ENCODE measurements at regions of chr17 and their contacts with region 1.

Region 1: GRCh38 chr17:64262417-64263260 is at the start of gene TEX2:
- DNase-seq: peak; percentile 41
- ATAC-seq: peak; percentile 34
- H3K4me3 ChIP-seq: peak within 1 kb of the TSS; percentile 89
- H3K27ac ChIP-seq: peak within 1 kb of the TSS; percentile 1; the same call in 1 of the 2 replicates
- H3K4me1 ChIP-seq: peaks cover 28% of the 10 kb centered on the region
- H3K27me3 ChIP-seq: no peaks in the 10 kb centered on the region
- CTCF ChIP-seq: no peak
- total RNA-seq, gene TEX2: 44.2 and 50.5 TPM in 2 replicates

Region 2: DNA sequence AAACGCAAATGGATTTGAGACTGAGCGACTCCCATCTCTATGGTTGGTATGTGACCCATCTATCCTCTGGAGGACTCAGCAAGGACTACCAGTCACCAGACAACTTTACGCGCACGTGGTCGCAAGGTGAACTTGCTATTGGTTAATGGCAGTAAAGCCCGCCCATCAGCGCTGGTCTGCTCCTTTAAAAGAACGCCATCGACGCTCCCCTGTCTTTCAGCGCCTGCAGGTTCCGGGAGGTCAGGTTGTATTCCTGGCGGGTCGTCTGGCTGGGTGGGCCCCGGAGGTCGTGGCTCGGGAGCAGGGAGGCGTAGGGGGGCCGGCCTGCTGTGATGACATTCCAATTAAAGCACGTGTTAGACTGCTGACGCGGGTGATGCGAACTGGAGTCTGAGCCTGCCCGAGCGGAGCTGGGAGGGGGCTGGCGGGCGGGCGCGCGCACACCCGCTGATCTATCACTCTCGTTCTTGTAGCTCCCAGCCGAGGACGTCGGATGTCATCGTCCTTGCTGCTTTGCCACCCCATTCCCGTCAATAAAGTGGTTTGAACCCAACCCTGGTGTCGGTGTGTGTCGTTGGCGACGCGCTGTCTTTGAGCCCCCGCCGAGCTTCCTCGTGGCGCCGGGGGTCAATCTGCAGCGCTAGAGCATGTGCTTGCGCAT is 116.8 kb before region 1 on chr17:
- CTCF ChIA-PET with region 1: interaction called, 4 read pairs
- POLR2A ChIA-PET with region 1: no interaction called
- intact Hi-C with region 1: loop called (anchors 5 kb)
- DNase-seq: peak; percentile 100
- ATAC-seq: peak; percentile 88
- H3K4me3 ChIP-seq: peak overlapping the region; percentile 81
- H3K27ac ChIP-seq: peak overlapping the region; percentile 79
- H3K4me1 ChIP-seq: peaks cover 15% of the 10 kb centered on the region
- H3K27me3 ChIP-seq: no peaks in the 10 kb centered on the region
- CTCF ChIP-seq: no peak

Region 3: DNA sequence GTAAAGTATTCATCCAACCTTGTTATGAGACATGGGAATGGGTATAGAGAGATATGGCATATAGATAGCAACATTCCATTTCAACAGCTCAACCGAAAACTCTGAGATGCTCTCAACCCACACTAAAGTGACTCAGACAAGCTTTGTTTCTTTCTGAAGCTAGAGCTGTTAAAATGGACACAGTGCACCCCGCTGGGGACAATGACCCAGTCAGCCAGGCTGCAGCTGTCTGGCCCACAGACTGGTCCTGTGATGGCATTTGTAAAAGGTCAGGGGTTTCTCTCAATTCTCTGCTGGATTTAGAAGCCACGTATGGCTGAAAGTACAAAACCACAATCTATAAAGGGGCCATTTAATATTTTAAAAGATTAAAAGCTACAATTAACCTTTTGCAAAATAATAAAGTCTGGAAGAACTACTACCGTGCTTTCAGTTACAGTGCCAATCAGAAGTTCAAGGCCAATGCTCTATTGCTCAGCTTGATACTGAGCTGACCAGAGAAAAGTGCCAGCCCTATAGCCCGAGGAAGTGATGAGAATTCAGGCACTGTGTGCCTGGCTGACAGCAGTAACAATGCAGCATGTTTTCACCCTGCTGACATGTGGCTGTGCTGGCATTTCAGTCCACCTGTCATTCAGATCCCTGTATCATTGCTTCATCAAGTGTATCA is 59.8 kb before region 1 on chr17:
- CTCF ChIA-PET with region 1: no interaction called
- POLR2A ChIA-PET with region 1: no interaction called
- intact Hi-C with region 1: loop called (anchors 5 kb)
- DNase-seq: peak; percentile 86
- ATAC-seq: peak; percentile 79
- H3K4me3 ChIP-seq: no peak overlapping the region
- H3K27ac ChIP-seq: 0 out of 2 replicates have a peak overlapping the region, but pooled peaks have one; percentile 7
- H3K4me1 ChIP-seq: peaks cover 16% of the 10 kb centered on the region
- H3K27me3 ChIP-seq: no peaks in the 10 kb centered on the region
- CTCF ChIP-seq: 0 out of 2 replicates have a peak, but pooled peaks have one; percentile 19

Region 4: DNA sequence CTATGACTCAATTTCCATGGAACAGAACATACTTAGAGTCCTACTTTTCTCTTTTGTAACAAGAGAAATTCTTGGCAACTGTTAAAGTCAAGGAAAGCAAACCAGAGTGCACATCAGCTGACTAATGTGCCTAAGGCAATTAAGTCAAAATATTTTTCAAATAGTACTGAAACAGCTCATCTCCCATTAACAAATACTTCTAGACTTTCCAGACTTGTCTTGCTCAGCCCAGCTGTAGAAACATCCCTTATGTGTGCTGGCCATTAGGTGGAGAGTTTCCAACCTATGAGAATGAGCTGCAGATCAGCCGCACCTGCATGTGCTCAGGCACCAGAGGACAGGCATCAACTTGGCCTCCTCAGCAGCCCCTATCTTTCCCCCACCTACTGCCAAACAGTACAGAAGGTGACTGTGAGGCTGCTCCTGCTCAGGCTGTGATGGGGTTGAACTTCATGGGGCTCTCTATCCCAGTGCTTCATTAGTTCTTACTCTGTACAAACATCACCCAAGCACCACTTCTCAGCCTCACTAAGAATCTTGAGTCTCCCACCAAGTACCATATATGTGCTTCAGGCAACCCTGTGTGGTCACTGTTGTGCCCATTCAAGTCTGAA is 31.7 kb before region 1 on chr17:
- CTCF ChIA-PET with region 1: no interaction called
- POLR2A ChIA-PET with region 1: no interaction called
- intact Hi-C with region 1: loop called (anchors 2 kb)
- DNase-seq: peak; percentile 97
- ATAC-seq: peak; percentile 95
- H3K4me3 ChIP-seq: no peak overlapping the region
- H3K27ac ChIP-seq: peak overlapping the region; percentile 58
- H3K4me1 ChIP-seq: peaks cover 25% of the 10 kb centered on the region
- H3K27me3 ChIP-seq: no peaks in the 10 kb centered on the region
- CTCF ChIP-seq: no peak

Region 5: DNA sequence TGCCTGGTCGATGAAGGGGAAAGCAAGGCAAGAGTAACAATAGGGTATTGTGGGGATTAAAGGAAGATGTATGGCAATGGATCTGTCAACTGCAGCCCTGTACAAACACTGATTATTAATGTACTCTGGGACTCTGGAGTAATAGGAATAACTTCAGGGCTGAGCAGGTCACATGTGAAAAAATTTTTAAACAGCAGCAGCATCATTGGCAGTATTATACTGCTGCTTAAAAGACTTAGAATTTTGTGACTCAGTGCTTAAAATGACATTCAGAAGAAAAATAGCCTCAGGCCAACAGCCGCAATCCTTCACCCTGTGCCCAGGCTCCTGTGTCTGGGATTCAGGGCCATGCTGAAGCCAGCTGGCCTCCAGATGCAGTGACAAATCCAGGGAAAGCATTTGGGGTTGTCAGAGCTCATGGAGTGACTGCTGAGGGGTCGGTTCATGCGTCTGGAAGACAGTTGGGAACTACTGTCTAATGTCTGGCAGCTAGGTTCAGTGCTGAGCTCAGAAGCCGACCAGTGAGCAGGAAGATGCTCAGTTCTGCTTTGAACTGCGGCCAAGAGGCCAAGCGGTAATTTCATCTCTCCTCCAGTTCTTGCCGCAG is 21.8 kb before region 1 on chr17:
- CTCF ChIA-PET with region 1: no interaction called
- POLR2A ChIA-PET with region 1: no interaction called
- intact Hi-C with region 1: loop called (anchors 2 kb)
- DNase-seq: peak; percentile 43
- ATAC-seq: no peak
- H3K4me3 ChIP-seq: no peak overlapping the region
- H3K27ac ChIP-seq: no peak overlapping the region
- H3K4me1 ChIP-seq: peaks cover 23% of the 10 kb centered on the region
- H3K27me3 ChIP-seq: no peaks in the 10 kb centered on the region
- CTCF ChIP-seq: no peak

Region 6: DNA sequence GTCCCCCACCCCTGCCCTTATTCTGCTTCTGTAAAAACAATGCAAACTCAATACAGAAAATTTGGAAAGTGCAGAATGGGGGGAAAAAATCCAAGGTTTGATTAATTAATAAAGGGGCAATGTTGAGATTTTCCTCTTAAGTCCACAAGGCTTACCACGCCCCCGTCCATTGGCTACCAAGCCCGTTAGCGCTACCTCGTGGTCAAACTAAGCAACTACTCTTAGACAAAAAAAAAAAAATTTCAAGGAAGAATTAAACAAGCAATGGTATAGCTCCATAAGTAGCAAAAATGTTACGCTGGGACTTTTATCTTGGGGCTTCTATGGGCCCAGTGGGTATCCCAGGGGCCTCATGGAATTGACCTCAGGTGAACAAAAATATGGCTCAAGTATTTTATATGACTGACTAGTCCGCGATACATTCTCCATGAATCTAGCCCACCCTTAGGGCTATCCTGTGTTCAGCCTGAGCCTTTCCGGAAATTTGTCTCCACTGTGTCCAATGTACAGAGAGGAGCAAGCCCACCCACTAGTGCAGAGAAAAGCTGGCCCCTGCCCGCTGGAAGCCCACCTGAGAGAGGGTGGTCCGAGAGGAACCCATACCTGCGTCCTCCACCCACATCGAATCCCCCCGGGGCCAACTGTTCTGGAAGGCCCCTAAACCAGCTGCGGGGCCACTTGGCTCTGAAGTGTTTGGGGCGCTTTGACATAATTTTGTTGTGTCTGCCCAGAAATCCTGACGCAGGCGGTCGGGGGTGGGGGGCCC is 19.5 kb after region 1 on chr17:
- CTCF ChIA-PET with region 1: interaction called, 5 read pairs
- POLR2A ChIA-PET with region 1: no interaction called
- intact Hi-C with region 1: loop called (anchors 1 kb)
- DNase-seq: peak; percentile 85
- ATAC-seq: peak; percentile 38
- H3K4me3 ChIP-seq: peak overlapping the region; percentile 2; the same call in 1 of the 2 replicates
- H3K27ac ChIP-seq: no peak overlapping the region
- H3K4me1 ChIP-seq: peaks cover 14% of the 10 kb centered on the region
- H3K27me3 ChIP-seq: no peaks in the 10 kb centered on the region
- CTCF ChIP-seq: peak; percentile 95

Region 7: GRCh38 chr17:64420143-64420971 is 157.7 kb after region 1 on chr17:
- CTCF ChIA-PET with region 1: no interaction called
- POLR2A ChIA-PET with region 1: no interaction called
- intact Hi-C with region 1: no loop called
- DNase-seq: peak; percentile 91
- ATAC-seq: peak; percentile 73
- H3K4me3 ChIP-seq: no peak overlapping the region
- H3K27ac ChIP-seq: no peak overlapping the region
- H3K4me1 ChIP-seq: peaks cover 10% of the 10 kb centered on the region
- H3K27me3 ChIP-seq: no peaks in the 10 kb centered on the region
- CTCF ChIP-seq: peak; percentile 93

Measured in PC-3 (cell line).